ENCODE measurements at regions of chr6 and their contacts with region 1.

Region 1: GRCh38 chr6:36340618-36341454 is 4.1 kb upstream of the BNIP5 start:
- DNase-seq: peak; percentile 59
- H3K4me3 ChIP-seq: no peak overlapping the region
- H3K27ac ChIP-seq: no peak overlapping the region
- H3K4me1 ChIP-seq: peaks cover 4% of the 10 kb centered on the region
- H3K27me3 ChIP-seq: peaks cover 36 to 43% of the 10 kb centered on the region in 2 experiments
- CTCF ChIP-seq: peak; percentile 98 to 99
- POLR2A ChIP-seq: no peak

Region 2: GRCh38 chr6:36326356-36326995 is 14.4 kb before region 1 on chr6:
- CTCF ChIA-PET with region 1: interaction called, 21 read pairs
- POLR2A ChIA-PET with region 1: no interaction called
- dilution Hi-C with region 1: no loop called
- intact Hi-C with region 1: no loop called
- DNase-seq: no peak
- H3K4me3 ChIP-seq: no peak overlapping the region
- H3K27ac ChIP-seq: no peak overlapping the region
- H3K4me1 ChIP-seq: no peaks in the 10 kb centered on the region
- H3K27me3 ChIP-seq: peaks cover 31% of the 10 kb centered on the region in 2 experiments
- CTCF ChIP-seq: no peak
- POLR2A ChIP-seq: no peak

Region 3: GRCh38 chr6:36360241-36361054 is 19.6 kb after region 1 on chr6:
- CTCF ChIA-PET with region 1: interaction called, 373 read pairs
- POLR2A ChIA-PET with region 1: no interaction called
- dilution Hi-C with region 1: no loop called
- intact Hi-C with region 1: loop called (anchors 1 kb)
- DNase-seq: peak; percentile 69
- H3K4me3 ChIP-seq: no peak overlapping the region
- H3K27ac ChIP-seq: no peak overlapping the region
- H3K4me1 ChIP-seq: peaks cover 17% of the 10 kb centered on the region
- H3K27me3 ChIP-seq: peaks cover 0 to 5% of the 10 kb centered on the region in 2 experiments
- CTCF ChIP-seq: peak; percentile 80 to 82
- POLR2A ChIP-seq: no peak

Region 4: DNA sequence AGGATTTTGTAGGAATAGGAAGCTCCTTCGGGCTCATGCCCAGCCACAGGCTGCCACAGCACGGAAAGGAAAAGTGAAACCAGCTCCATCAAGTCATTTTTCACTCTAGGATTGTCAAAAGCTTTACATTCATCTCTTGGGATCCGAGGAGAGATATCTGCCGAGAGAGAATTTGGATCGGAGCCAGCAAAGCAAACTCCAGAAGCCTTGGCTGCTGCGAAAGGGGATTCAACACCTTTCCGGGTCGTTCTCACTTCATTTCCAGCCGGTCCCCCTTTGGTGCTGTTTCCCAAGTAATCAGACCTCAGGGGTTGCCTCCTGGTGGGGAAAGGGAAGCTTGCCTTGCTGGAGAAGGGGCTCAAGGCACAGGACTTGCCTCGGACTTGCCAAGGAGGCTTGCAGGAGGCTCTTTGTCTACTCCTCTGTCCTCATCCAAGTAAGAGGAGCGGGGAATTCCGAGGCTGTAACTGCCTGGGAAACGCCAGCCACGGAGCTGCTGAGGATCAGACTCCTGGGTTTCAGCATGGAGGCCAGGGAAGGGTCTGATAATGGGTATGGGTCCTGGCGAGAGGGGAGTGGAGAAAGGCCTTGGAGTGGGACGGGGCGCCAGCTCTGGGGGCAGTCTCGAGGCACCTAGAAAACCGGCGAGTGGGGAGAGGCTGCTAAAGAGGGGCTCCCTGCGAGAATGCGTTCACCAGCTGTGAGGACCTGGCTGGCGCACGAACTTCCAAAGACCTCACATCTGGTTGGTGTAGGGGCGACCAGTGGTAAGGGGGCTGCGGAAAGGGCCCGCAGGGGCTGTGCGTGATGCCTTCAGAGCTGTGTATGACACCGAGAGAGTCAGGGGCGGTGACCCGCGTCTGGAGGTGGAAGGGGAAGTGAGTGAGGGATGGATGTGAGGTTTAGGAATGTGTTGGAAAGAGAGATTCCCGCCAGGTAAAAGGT is 45.9 kb after region 1 on chr6:
- CTCF ChIA-PET with region 1: interaction called, 12 read pairs
- POLR2A ChIA-PET with region 1: interaction called, 3 read pairs
- dilution Hi-C with region 1: no loop called
- intact Hi-C with region 1: no loop called
- DNase-seq: peak; percentile 74
- H3K4me3 ChIP-seq: peak overlapping the region; percentile 42 to 66 (median 61)
- H3K27ac ChIP-seq: peak overlapping the region; percentile 10
- H3K4me1 ChIP-seq: peaks cover 13% of the 10 kb centered on the region
- H3K27me3 ChIP-seq: peaks cover 18 to 21% of the 10 kb centered on the region in 2 experiments
- CTCF ChIP-seq: peak in 1 of 2 donors; percentile 22
- POLR2A ChIP-seq: no peak

Measured in endothelial cell of umbilical vein (primary cell).